Tibial artery (tissue), 4 donors: ENCODE measurements at regions of chr17 and their contacts with region 1.

Region 1: DNA sequence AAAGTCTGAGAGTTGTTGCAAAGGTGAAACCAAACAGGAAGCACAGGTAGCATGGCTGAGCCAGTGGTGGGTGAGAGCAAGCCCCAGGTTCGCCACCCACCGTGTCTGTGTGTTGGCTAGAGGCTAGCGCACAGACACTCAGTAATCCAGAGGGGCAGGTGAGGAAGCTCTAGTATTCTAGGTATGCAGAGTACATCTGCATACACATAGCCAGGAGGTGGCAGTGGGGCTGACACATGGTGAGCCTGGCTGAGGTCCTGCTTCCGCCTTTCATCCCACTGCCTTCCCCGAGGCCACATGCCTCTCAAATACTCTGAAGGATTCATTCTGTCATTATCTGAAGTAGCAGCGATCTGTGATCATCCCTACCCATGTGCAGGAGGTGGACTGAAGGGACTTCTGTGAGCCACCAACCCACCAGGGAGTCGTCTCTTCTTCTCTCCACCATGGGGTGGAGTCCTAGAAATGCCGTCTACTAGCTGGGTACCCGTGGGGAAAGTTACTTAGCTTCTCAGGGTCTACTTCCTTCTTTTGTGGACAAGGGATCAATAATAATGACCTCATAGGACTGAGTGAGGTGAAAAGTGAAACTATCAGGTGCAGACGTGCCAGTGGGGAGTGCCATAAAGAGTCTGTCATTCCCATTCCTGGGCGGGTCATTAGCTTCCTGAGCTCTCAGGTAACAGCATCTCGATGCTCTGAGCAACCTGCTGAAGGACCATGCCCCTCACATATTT is 36.0 kb upstream of the ICAM2 start:
- DNase-seq: no peak
- H3K4me3 ChIP-seq: no peak overlapping the region
- H3K27ac ChIP-seq: no peak overlapping the region
- H3K4me1 ChIP-seq: no peaks in the 10 kb centered on the region
- H3K27me3 ChIP-seq: no peaks in the 10 kb centered on the region
- CTCF ChIP-seq: no peak

Region 2: DNA sequence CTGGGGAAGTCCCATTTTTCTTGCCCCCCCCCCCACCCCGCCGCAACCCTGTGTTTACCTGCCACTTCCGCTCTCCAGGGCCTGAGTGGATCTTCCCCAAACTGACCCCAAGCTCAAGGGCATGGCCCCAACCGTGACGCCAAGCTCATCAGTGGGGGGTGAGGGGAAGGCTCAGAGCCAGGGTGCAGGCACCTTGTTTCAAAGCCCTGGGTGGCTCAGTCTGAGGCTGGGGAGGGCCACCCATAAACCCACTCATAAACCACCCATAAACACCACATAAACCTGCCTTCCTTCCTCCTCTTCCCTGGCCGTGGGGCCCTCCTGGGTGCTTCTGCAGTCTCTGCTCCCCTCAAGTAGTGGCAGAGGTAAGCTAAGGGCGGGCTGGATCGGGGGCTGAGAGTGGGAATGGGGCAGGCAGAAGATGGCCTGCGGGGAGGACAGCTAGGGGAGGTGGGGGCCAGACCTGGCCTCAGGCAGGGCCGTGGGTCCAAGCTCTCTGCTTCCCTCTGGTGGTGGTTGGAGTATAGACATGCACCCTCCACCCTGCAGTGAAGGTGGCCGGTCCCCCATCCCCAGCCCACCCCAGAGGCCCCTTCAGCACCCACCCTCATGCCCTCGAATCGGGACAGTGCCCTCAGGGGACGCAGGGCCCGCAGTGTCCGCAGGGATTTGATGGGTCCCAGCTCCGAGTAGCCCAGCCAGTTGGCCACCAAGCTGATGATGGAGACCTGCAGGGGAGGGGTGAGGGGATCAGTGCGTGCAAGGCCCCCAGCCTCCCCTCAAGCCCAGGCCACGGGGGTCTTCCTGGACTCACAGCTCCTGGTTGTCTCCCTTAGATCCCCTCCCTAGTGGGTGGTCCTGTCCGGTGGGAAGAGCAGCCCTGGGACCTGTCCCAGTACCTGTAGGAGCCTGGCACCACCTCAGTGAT is 109.7 kb before region 1 on chr17:
- intact Hi-C with region 1: no loop called
- DNase-seq: no peak
- H3K4me3 ChIP-seq: no peak overlapping the region
- H3K27ac ChIP-seq: no peak overlapping the region
- H3K4me1 ChIP-seq: peaks cover 0 to 2% (median 0%) of the 10 kb centered on the region in 4 donors
- H3K27me3 ChIP-seq: peaks cover 0 to 46% of the 10 kb centered on the region in 2 donors
- CTCF ChIP-seq: peak; percentile 51 to 55

Region 3: DNA sequence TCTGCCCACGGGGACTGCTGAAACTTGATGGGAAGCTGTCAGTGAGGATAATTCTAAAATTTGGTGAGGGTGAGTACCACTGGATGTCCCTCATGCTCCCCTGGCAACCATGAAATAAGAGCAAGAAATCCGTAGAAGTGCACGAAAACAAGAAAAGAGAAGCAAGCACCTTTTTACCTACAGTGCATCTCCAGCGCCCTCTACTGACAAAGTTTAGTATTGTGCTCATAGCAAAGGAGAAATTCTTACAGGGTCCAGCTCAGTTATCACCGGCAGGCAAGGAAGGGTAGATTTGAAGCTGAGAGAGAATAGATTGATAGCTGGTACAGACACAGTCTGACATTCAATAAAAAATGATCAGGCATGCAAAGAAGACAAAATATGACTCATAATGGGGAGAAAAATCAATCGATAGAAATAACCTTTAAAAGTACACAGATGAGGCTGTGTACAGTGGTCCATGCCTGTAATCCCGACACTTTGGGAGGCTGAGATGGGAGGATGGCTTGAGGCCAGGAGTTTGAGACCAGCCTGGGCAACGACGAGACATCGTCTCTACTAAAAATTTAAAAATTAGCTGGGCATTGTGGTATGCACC is 234.9 kb after region 1 on chr17:
- intact Hi-C with region 1: loop called (anchors 10 kb)
- DNase-seq: no peak
- H3K4me3 ChIP-seq: no peak overlapping the region
- H3K27ac ChIP-seq: no peak overlapping the region
- H3K4me1 ChIP-seq: no peaks in the 10 kb centered on the region
- H3K27me3 ChIP-seq: no peaks in the 10 kb centered on the region
- CTCF ChIP-seq: no peak